GM10248 (cell line): ENCODE measurements at regions of chr2 and their contacts with region 1.

Region 1: GRCh38 chr2:71798266-71799012 is 345.1 kb downstream of the DYSF start:
- DNase-seq: peak; percentile 59
- CTCF ChIP-seq: peak; percentile 49

Region 2: GRCh38 chr2:71426721-71427120 is 371.7 kb before region 1 on chr2:
- CTCF ChIA-PET with region 1: no interaction called
- POLR2A ChIA-PET with region 1: no interaction called
- DNase-seq: no peak
- CTCF ChIP-seq: no peak

Region 3: DNA sequence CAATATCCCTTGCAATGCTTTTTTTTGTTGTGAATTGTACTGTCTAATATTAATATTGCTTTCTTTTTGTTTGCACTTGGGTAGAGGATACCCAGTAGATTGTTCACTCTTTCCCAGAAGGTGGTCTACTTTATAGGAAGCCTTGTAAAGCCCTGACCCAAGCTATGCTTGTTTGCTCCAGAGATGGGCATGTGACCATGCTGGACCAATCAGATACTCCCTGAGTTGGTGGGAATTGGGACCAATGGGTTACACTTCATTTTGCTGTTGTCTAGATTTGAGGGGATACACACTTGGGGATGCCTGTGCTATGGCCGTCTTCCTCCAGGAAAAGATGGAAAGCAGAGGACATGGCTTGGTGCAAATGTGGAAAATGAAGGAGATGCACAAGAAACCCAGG is 30.8 kb before region 1 on chr2:
- CTCF ChIA-PET with region 1: no interaction called
- POLR2A ChIA-PET with region 1: no interaction called
- DNase-seq: no peak
- CTCF ChIP-seq: no peak

Region 4: DNA sequence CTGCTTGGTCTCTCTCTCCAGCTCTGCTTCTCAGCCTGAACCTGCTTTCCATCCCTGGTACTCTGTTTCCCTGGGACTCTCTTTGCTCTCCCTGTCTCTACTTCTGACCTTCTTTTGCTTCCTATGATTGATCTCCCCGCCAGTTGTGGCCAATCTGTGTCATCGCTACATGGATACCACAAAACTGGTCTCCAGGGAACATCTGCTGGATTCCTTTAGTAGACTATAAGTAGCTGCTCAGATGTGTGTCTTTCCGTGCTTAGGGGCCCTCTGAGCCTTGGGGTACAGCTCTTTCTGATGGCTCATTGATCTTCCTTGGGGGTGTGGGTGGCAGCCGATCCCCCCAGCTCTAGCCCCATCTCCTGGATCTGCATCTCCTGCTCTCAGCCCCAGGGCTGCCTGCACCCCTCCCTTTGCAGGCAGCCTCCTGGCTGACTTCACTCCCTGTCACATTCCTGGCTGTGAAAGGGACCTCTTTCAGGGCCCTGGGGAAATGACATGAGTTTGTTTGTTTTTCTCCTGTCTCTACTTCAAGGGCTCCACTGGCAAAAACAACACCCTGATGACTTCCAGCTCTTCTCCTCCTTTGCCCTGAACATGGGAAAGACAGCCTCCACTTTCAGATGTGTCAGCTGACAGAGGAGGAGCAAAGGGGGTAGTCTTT is 15.5 kb after region 1 on chr2:
- CTCF ChIA-PET with region 1: interaction called, 38 read pairs
- POLR2A ChIA-PET with region 1: no interaction called
- DNase-seq: no peak
- CTCF ChIP-seq: no peak

Region 5: GRCh38 chr2:71826826-71827523 is 28.5 kb after region 1 on chr2:
- CTCF ChIA-PET with region 1: no interaction called
- POLR2A ChIA-PET with region 1: no interaction called
- DNase-seq: no peak
- CTCF ChIP-seq: no peak